ENCODE measurements at regions of chr2 and their contacts with region 1.

Region 1: GRCh38 chr2:120699292-120699691 is 36.4 kb upstream of the GLI2 start:
- DNase-seq: no peak
- ATAC-seq: no peak

Region 2: DNA sequence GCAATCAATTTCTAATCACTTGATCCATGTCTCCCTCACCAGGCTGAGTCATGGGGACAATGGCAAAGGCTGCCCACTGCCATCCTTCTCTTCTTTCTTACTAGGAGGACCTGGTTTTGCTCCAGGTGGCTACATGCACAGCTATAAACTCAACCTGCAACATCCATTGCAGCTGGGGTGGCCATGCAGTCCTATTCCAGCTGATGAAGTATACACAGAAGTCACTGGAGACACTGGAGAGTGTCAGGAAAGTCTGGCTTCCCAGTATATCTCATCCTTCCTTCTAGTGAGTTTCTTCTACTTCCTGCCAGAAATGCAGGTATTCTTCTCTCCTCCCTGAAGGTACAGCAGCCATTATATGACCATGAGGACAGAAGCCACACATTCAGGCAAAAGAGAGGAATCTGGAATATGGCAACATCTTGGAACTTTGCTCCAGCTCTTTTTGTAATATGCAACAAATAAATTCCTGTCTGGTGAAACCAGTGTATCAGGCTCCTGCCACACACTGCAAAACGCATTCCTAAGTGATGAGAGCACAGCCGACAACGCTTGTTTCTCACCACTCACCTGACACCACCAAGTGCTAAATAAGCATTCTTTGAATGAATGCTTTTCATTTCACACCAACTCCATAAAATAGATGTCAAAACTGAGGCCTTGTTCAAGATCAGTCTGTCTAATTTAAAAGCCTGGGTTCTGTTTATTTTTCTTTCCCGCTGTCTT is 1207.3 kb before region 1 on chr2:
- intact Hi-C with region 1: loop called (anchors 5 kb)
- DNase-seq: no peak
- ATAC-seq: no peak

Region 3: DNA sequence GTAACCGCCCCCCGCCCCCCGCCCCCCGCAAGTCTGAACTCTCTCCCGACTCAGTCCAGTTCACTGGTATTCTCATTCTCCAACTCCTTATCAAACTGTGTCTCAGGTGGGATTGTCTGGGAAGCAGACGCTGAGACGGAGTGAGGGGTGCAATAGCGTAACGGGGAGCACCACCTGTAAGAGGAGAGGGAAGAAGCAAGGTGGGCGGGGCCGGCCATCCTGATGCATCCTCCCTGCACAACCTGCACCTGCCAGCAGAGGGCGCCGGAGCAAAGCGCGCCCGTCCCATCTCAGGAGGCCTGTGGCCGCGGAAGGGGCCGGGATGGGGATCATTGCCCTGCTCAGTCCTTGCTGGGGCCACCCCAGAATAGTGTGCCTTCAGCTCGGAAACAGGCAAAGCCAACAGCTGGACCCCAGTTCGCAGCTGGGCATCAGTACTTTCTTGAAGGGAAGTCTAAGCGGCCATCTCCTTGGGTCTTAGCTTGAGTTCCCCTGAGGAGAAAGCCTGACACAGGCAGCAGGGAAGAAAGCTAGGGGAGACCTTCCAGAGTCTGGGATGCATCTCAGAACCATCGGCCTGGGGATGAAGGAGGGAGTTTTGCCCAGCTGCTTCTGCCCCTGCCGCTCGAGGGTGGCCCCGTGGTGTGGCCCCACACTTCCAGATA is 377.7 kb after region 1 on chr2:
- intact Hi-C with region 1: loop called (anchors 5 kb)
- DNase-seq: peak; percentile 77
- ATAC-seq: peak; percentile 45

Region 4: GRCh38 chr2:121489284-121489683 is 790.0 kb after region 1 on chr2:
- intact Hi-C with region 1: no loop called
- DNase-seq: no peak
- ATAC-seq: no peak

Measured in sciatic nerve (tissue), 2 donors.